ENCODE measurements at regions of chr17 and their contacts with region 1.

Region 1: GRCh38 chr17:59892924-59893676 is at the starts of genes RPS6KB1 and TUBD1:
- DNase-seq: peak; percentile 96 to 97
- H3K4me3 ChIP-seq: peak within 1 kb of the TSS; percentile 75
- H3K27ac ChIP-seq: peak within 1 kb of the TSS; percentile 40
- H3K4me1 ChIP-seq: peaks cover 24% of the 10 kb centered on the region
- H3K27me3 ChIP-seq: no peaks in the 10 kb centered on the region
- CTCF ChIP-seq: peak; percentile 19; the same call in 1 of the 2 replicates
- total RNA-seq, gene RPS6KB1: 31.4 and 41.8 TPM in 2 replicates
- total RNA-seq, gene TUBD1: 11.8 and 13.5 TPM in 2 replicates

Region 2: GRCh38 chr17:59763861-59764260 is 129.2 kb before region 1 on chr17:
- CTCF ChIA-PET with region 1: no interaction called
- POLR2A ChIA-PET with region 1: interaction called, 20 read pairs
- intact Hi-C with region 1: no loop called
- DNase-seq: peak in 1 of 2 experiments; percentile 63
- H3K4me3 ChIP-seq: no peak overlapping the region
- H3K27ac ChIP-seq: peak overlapping the region; percentile 72
- H3K4me1 ChIP-seq: peaks cover 43% of the 10 kb centered on the region
- H3K27me3 ChIP-seq: no peaks in the 10 kb centered on the region
- CTCF ChIP-seq: no peak

Region 3: DNA sequence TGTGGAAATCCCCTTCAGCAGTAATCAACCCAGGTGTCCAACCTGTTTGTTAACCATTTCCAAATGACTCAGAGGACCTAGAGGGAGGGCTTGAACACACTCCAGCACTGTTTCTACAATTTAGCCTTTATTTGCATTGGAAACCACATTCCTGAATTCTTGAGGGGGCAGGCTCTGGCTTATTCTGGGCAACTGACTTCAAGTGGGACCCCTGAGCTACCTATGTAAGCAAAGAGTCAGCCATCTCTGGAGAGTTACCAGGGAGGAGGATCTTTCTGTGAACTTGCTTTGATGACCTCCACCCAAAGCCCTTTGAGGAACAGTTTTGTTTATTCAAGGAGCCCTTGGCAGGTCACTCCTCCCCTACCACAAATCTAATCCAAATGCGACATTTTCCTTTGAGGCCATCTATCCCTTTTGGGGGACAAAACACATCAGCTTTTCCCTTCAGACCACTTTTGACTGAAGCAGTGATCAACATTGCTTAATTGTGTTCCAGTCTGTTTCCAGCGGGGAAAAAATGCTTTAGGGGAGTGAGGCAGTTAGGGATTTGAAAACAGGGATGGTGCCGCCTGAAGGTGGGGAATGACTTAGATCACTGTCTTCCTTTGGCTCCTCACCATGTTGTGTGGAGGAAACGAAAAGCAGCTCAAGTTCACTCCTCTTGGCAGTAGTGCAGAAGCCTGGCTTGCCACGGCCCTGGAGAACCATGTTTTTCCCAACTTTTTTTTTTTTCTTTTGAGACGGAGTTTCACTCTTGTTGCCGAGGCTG is 46.5 kb before region 1 on chr17:
- CTCF ChIA-PET with region 1: no interaction called
- POLR2A ChIA-PET with region 1: interaction called, 3 read pairs
- intact Hi-C with region 1: loop called (anchors 2 kb)
- DNase-seq: peak; percentile 75 to 100
- H3K4me3 ChIP-seq: peak overlapping the region; percentile 46; the same call in 1 of the 2 replicates
- H3K27ac ChIP-seq: peak overlapping the region; percentile 99
- H3K4me1 ChIP-seq: peaks cover 76% of the 10 kb centered on the region
- H3K27me3 ChIP-seq: no peaks in the 10 kb centered on the region
- CTCF ChIP-seq: no peak

Region 4: DNA sequence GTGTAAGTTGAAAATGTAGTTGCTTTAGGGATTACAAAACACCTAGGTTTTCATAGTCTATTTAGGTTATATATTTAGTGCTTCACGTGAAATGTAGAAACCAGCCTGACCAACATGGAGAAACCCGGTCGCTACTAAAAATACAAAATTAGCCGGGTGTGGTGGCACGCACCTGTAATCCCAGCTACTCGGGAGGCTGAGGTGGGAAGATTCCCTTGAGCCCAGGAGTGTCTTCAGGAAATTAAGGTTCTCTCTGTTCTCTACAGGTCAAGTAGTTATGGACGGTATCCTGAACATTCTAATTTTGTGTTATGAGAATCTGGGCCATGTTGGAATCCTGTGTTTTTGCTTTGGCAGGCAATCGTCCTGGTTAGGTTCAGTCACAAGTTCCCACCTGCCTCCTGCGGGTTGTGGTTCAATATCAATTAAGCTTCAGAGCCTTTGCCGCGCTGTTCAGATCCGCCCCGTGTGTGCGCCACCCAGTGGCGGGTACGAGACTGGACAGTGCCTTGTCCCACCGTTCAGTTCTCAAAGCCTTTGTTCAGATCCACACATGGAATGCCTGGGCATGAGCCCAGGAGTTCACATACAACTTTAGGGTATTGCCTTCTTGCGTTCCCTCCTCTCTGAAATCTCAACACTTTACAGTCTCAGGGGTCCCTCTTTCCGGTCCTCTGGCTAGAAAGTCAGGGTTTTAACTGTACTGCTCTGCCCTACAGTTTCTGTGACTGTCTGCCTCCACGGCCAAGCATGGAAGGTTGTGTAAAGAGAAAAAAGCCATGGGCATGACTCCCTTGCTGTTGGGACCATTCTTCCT is 143.9 kb after region 1 on chr17:
- CTCF ChIA-PET with region 1: no interaction called
- POLR2A ChIA-PET with region 1: no interaction called
- intact Hi-C with region 1: no loop called
- DNase-seq: peak; percentile 71 to 72
- H3K4me3 ChIP-seq: no peak overlapping the region
- H3K27ac ChIP-seq: no peak overlapping the region
- H3K4me1 ChIP-seq: no peaks in the 10 kb centered on the region
- H3K27me3 ChIP-seq: no peaks in the 10 kb centered on the region
- CTCF ChIP-seq: peak; percentile 93

Region 5: DNA sequence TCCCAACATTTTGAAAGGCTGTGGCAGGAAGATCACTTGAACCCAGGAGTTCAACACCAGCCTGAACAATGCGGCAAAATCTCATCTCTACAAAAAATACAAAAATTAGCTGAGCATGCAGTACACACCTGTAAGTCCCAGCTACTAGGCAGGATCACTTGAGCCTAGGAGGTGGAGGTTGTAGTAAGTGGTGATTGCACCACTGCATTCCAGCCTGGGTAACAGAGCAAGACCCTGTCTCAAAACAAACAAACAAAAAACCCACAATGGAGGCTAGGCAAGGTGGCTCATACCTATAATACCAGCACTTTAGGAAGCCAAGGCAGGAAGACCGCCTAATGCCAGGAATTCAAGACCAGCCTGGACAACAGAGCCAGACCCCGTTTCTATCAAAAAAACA is 621.0 kb after region 1 on chr17:
- CTCF ChIA-PET with region 1: no interaction called
- POLR2A ChIA-PET with region 1: no interaction called
- intact Hi-C with region 1: no loop called
- DNase-seq: no peak
- H3K4me3 ChIP-seq: no peak overlapping the region
- H3K27ac ChIP-seq: no peak overlapping the region
- H3K4me1 ChIP-seq: no peaks in the 10 kb centered on the region
- H3K27me3 ChIP-seq: no peaks in the 10 kb centered on the region
- CTCF ChIP-seq: no peak